ENCODE measurements at regions of chr2 and their contacts with region 1.

Region 1: DNA sequence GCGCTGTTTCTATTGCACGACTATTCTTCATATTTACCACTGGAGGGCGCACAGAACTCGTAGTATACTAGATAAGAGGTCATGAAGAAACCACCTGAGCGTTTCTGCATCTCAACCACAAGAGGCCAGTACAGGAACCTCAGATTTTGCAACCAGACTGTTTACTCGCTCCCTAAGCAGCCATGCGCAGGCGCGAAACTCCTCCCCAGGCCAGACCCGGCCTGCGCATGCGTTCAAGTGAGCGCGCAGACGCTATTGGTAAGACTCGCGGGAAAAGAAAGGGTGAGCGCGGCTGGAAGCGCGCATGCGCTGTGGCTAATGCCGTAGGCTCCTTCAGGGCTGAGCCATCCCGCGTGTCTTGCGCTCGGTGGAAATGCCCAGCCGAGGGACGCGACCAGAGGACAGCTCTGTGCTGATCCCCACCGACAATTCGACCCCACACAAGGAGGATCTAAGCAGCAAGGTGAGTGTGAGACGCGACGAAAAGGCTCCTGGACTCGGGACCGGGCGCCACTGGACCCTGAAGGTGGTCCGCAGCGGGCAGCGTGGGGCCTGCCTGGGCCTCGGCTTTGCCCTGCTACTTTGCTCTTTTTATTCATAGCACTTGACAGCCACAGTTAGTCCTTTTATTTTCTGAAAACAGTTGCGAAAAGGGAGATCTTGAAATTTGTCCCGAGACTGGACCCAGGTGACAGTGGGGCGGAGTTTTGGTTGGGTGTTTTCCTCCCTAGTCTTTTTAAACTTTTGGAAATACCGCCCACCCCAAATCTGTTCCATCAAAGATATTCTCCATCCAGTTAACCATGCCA is at the start of gene ASNSD1:
- DNase-seq: peak; percentile 99
- H3K4me3 ChIP-seq: peak within 1 kb of the TSS; percentile 67
- H3K4me3 Mint-ChIP-seq: no peak within 1 kb of the TSS
- H3K27ac Mint-ChIP-seq: no peak within 1 kb of the TSS
- H3K4me1 ChIP-seq: peaks cover 22% of the 10 kb centered on the region
- H3K4me1 Mint-ChIP-seq: no peaks in the 10 kb centered on the region
- H3K27me3 ChIP-seq: no peaks in the 10 kb centered on the region
- H3K27me3 Mint-ChIP-seq: no peaks in the 10 kb centered on the region
- CTCF ChIP-seq: peak; percentile 93 to 96
- total RNA-seq, gene ASNSD1: 39.2 and 49.4 TPM in 2 replicates

Region 2: DNA sequence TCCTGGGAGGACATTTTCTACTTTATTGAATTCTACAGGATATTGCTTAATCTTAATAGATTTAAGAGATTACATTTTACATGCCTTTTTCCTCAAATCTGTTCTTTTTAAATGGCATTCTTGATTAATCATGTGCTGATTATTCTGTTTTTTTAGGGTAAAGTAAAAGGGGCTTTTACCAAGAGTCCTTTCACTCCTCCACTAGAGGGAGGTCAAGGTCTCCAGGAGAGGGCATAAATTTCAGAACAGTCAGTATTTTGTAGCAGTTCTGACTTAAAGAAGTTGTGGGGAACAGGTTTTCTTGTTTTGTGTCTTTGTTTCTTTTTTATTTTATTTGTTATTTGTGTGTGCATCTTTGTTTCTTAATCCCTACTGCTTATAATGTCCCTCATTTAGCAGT is 194.7 kb before region 1 on chr2:
- CTCF ChIA-PET with region 1: interaction called, 3 read pairs
- POLR2A ChIA-PET with region 1: no interaction called
- intact Hi-C with region 1: loop called (anchors 1 kb)
- DNase-seq: peak in 1 of 2 experiments; percentile 51
- H3K4me3 ChIP-seq: no peak overlapping the region
- H3K4me3 Mint-ChIP-seq: no peak overlapping the region
- H3K27ac Mint-ChIP-seq: no peak overlapping the region
- H3K4me1 ChIP-seq: no peaks in the 10 kb centered on the region
- H3K4me1 Mint-ChIP-seq: no peaks in the 10 kb centered on the region
- H3K27me3 ChIP-seq: no peaks in the 10 kb centered on the region
- H3K27me3 Mint-ChIP-seq: no peaks in the 10 kb centered on the region
- CTCF ChIP-seq: peak; percentile 89 to 90

Region 3: GRCh38 chr2:189633392-189633811 is 27.9 kb before region 1 on chr2:
- CTCF ChIA-PET with region 1: no interaction called
- POLR2A ChIA-PET with region 1: no interaction called
- intact Hi-C with region 1: no loop called
- DNase-seq: peak in 1 of 2 experiments; percentile 33
- H3K4me3 ChIP-seq: no peak overlapping the region
- H3K4me3 Mint-ChIP-seq: no peak overlapping the region
- H3K27ac Mint-ChIP-seq: no peak overlapping the region
- H3K4me1 ChIP-seq: peaks cover 19% of the 10 kb centered on the region
- H3K4me1 Mint-ChIP-seq: peaks cover 12% of the 10 kb centered on the region
- H3K27me3 ChIP-seq: no peaks in the 10 kb centered on the region
- H3K27me3 Mint-ChIP-seq: no peaks in the 10 kb centered on the region
- CTCF ChIP-seq: peak; percentile 45 to 54

Region 4: DNA sequence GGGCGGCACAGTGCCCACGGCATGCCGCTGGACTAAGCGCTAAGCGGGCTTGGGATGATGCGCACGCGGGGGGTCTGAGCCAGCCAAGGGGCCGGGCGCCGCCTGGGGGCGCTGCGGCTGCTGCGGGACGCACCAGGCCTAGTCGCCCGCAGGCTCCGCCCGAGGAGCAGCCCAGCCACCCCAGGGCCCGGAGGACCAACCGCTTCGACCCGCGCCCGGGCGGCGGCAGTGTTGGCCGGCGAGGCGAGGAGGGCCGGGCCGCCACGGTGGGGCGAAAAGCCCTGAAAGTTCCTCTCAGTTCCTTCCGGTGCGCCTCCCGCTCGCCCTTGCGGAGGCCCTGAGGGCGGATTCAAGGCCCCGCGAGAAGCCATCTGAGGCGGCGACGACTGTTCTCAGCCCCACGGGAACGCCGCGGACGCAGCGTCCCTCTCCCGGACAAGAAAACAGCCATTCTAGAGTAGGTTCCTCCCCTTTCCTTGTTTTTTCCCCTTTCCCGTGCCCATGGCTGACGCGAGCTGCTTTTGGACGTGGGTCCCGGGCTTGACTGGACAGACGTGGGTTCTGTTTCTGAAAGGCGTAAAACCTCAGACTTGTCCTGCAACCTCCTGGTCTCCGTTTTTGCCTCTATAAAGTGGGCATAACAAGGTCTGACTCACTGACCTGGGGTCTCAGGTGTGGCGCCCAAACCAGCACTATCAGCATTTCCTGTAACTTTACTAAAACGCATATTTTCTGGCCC is 13.2 kb after region 1 on chr2 and contains the start of gene ANKAR:
- CTCF ChIA-PET with region 1: interaction called, 12 read pairs
- POLR2A ChIA-PET with region 1: no interaction called
- intact Hi-C with region 1: loop called (anchors 1 kb)
- DNase-seq: peak; percentile 94 to 98
- H3K4me3 ChIP-seq: peak within 1 kb of the TSS; percentile 77
- H3K4me3 Mint-ChIP-seq: peak within 1 kb of the TSS; percentile 88
- H3K27ac Mint-ChIP-seq: peak within 1 kb of the TSS; percentile 92
- H3K4me1 ChIP-seq: no peaks in the 10 kb centered on the region
- H3K4me1 Mint-ChIP-seq: peaks cover 11% of the 10 kb centered on the region
- H3K27me3 ChIP-seq: no peaks in the 10 kb centered on the region
- H3K27me3 Mint-ChIP-seq: no peaks in the 10 kb centered on the region
- CTCF ChIP-seq: peak; percentile 68 to 79
- total RNA-seq, gene ANKAR: 2.2 and 4.7 TPM in 2 replicates

Region 5: DNA sequence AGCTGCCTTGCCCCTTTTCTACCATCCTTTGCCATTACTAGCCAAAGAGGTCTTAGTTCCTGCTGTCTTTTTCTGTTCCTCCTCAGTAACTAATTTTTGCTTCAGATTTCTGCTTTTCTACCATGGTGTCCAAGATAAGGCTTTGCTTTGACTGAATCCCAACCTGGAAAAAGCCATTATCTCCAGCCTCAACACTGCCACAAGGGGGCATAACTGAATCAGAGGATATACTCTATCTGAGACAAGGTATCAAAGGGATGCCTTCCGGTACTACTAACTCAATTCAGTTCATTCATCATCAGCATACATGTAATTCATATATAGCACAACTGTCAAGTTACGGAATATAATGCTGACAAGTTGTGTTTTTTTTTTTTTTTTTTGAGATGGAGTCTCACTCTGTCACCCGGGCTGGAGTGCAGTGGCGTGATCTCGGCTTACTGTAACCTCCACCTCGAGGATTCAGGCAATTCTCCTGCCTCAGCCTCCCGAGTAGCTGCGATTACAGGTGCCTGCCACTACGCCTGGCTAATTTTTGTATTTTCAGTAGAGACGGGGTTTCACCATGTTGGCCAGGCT is 89.8 kb after region 1 on chr2:
- CTCF ChIA-PET with region 1: no interaction called
- POLR2A ChIA-PET with region 1: no interaction called
- intact Hi-C with region 1: loop called (anchors 1 kb)
- DNase-seq: peak; percentile 53 to 61
- H3K4me3 ChIP-seq: no peak overlapping the region
- H3K4me3 Mint-ChIP-seq: no peak overlapping the region
- H3K27ac Mint-ChIP-seq: no peak overlapping the region
- H3K4me1 ChIP-seq: no peaks in the 10 kb centered on the region
- H3K4me1 Mint-ChIP-seq: no peaks in the 10 kb centered on the region
- H3K27me3 ChIP-seq: no peaks in the 10 kb centered on the region
- H3K27me3 Mint-ChIP-seq: no peaks in the 10 kb centered on the region
- CTCF ChIP-seq: peak; percentile 57 to 69

Region 6: GRCh38 chr2:189783927-189784867 is 122.8 kb after region 1 on chr2 and contains the starts of genes ORMDL1 and PMS1:
- CTCF ChIA-PET with region 1: no interaction called
- POLR2A ChIA-PET with region 1: no interaction called
- intact Hi-C with region 1: loop called (anchors 5 kb)
- DNase-seq: peak; percentile 95 to 98
- H3K4me3 ChIP-seq: peak within 1 kb of the TSS; percentile 88
- H3K4me3 Mint-ChIP-seq: peak within 1 kb of the TSS; percentile 83
- H3K27ac Mint-ChIP-seq: peak within 1 kb of the TSS; percentile 82
- H3K4me1 ChIP-seq: peaks cover 5% of the 10 kb centered on the region; the same call in 1 of the 2 replicates
- H3K4me1 Mint-ChIP-seq: peaks cover 23% of the 10 kb centered on the region
- H3K27me3 ChIP-seq: no peaks in the 10 kb centered on the region
- H3K27me3 Mint-ChIP-seq: no peaks in the 10 kb centered on the region
- CTCF ChIP-seq: no peak
- total RNA-seq, gene ORMDL1: 52.1 and 52.7 TPM in 2 replicates
- total RNA-seq, gene PMS1: 38.1 and 40.2 TPM in 2 replicates

Region 7: DNA sequence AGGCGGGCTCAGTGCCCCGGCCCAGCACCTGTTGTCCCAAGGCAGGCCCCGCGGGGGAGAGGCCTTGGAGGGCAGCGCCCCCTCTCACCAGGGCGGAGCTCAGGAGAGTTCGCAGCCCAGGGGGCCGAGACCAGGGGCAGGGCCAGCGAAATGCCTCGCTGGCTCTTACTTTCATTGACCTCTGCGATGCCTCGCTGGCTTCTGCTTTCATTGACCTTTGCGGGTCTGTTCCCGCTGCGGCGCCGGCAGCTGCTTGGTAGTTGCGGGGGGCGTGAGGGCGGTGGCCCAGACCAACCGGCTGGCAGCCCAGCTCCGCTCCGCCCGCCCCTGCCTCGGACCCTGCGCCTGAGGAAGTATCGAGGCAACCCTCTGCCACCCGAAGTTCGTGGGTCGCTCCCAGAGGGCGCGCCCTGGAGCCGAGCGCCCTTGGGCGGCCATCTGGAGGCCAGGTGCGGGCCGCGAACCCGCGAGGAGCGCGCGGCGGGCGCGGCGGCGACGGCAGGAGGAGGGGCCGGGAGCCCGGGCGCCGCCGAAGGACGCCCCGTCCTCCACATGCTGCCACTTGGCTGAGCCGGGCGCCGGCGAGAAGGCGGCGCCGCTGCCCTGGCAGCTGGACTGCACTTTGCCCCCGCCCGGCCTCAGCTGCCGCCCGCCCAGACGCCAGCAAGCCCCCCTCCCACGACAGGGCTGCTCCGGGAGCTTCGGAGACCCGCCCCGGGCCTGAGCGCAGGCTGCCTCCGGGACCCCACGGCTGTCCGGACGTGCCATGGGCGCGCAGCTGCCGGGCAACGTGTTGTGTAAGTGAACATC is 519.2 kb after region 1 on chr2:
- CTCF ChIA-PET with region 1: no interaction called
- POLR2A ChIA-PET with region 1: no interaction called
- intact Hi-C with region 1: loop called (anchors 5 kb)
- DNase-seq: peak; percentile 84 to 89
- H3K4me3 ChIP-seq: peak overlapping the region; percentile 78
- H3K4me3 Mint-ChIP-seq: peak overlapping the region; percentile 83
- H3K27ac Mint-ChIP-seq: no peak overlapping the region
- H3K4me1 ChIP-seq: 0 out of 2 replicates have a peak, but pooled peaks cover 4% of the 10 kb centered on the region
- H3K4me1 Mint-ChIP-seq: peaks cover 6% of the 10 kb centered on the region
- H3K27me3 ChIP-seq: no peaks in the 10 kb centered on the region
- H3K27me3 Mint-ChIP-seq: no peaks in the 10 kb centered on the region
- CTCF ChIP-seq: peak; percentile 47 to 92